ENCODE measurements at regions of chr12 and their contacts with region 1.

Region 1: DNA sequence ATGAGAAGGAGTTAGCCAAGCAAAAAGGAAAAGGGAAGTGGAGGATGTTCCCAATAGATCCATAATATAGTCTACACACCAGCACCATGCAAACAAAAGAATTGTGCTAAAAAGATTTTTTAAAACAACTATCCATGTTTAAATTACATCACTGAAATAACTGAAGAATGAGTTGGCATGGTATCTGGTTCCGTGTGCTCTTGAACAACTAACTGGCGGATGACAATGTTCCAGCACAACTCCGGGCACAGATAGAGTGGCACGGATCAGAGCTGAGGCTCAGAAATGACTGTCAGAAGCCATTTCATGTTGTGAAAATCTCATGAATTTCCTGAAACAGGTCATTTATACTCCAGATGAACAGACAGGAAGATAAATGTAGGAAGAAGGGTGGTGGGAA is 153.1 kb downstream of the HMGA2 start:
- DNase-seq: no peak
- ATAC-seq: no peak
- H3K4me3 ChIP-seq: no peak overlapping the region
- H3K27ac ChIP-seq: no peak overlapping the region
- H3K4me1 ChIP-seq: no peaks in the 10 kb centered on the region
- H3K27me3 ChIP-seq: no peaks in the 10 kb centered on the region
- CTCF ChIP-seq: no peak
- POLR2A ChIP-seq: no peak
- RAD21 ChIP-seq: no peak

Region 2: GRCh38 chr12:65993781-65994180 is 16.4 kb after region 1 on chr12:
- CTCF ChIA-PET with region 1: no interaction called
- POLR2A ChIA-PET with region 1: no interaction called
- RAD21 ChIA-PET with region 1: no interaction called
- intact Hi-C with region 1: loop called (anchors 1 kb)
- DNase-seq: no peak
- ATAC-seq: no peak
- H3K4me3 ChIP-seq: no peak overlapping the region
- H3K27ac ChIP-seq: no peak overlapping the region
- H3K4me1 ChIP-seq: no peaks in the 10 kb centered on the region
- H3K27me3 ChIP-seq: no peaks in the 10 kb centered on the region
- CTCF ChIP-seq: no peak
- POLR2A ChIP-seq: no peak
- RAD21 ChIP-seq: no peak

Measured in HCT116 (cell line).